Activated naive CD4-positive, alpha-beta T cell treated with anti-CD3 and anti-CD28 coated beads, Interleukin-2, amount 10 ng/mL, durations not matched to agents 7 days and 5 days (primary cell): ENCODE measurements at regions of chr2 and their contacts with region 1.

Region 1: DNA sequence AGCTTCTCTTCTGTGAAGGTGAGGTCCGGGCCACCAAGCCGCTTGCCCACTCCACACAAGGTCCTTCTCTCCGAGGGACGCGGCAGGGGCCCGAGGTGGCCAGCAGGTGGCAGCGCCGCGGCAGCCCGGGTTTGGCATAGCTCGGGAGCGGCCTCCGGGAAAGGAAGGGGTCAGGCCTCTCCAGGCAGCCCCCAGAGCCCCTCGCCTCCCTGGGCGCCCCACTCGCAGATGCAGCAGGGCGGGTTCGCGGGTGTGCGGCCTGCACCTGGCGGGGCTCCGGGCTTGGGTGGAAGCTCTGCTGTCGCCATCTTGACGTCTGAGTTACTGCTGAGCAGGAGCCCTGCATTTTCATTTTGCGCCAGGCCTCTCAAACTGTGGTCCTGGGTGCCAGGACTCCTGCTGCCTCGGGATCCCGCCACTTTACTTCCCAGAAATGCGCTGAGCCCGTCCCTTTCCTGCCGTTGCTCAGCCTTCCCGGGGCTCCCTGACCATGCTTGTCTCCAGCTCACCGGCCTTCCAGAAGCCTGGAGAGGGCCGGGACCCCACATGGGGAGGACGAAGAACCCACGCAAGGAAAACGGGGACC is 18.6 kb upstream of the NCL start:
- DNase-seq: peak; percentile 81
- H3K4me3 Mint-ChIP-seq: peak overlapping the region; percentile 77
- H3K27ac Mint-ChIP-seq: peak overlapping the region; percentile 92
- H3K4me1 Mint-ChIP-seq: peaks cover 29% of the 10 kb centered on the region
- H3K27me3 Mint-ChIP-seq: peaks cover 15% of the 10 kb centered on the region

Region 2: GRCh38 chr2:231463698-231464575 is 19.0 kb before region 1 on chr2 and contains the start of gene NCL:
- CTCF ChIA-PET with region 1: interaction called, 34 read pairs
- DNase-seq: peak; percentile 93
- H3K4me3 Mint-ChIP-seq: peak within 1 kb of the TSS; percentile 94
- H3K27ac Mint-ChIP-seq: peak within 1 kb of the TSS; percentile 99
- H3K4me1 Mint-ChIP-seq: peaks cover 49% of the 10 kb centered on the region
- H3K27me3 Mint-ChIP-seq: no peaks in the 10 kb centered on the region